Heart right ventricle (tissue), 16 donors: ENCODE measurements at regions of chr12 and their contacts with region 1.

Region 1: GRCh38 chr12:102905229-102905628 is 11.8 kb downstream of the PAH start:
- DNase-seq: no peak
- ATAC-seq: no peak
- H3K4me3 ChIP-seq: no peak overlapping the region
- H3K27ac ChIP-seq: no peak overlapping the region
- H3K4me1 ChIP-seq: no peaks in the 10 kb centered on the region
- H3K27me3 ChIP-seq: no peaks in the 10 kb centered on the region
- CTCF ChIP-seq: no peak

Region 2: GRCh38 chr12:102757154-102757881 is 147.9 kb before region 1 on chr12:
- intact Hi-C with region 1: no loop called
- DNase-seq: peak; percentile 44 to 64
- ATAC-seq: peak in 7 of 8 donors; percentile 50 to 74 (median 59)
- H3K4me3 ChIP-seq: no peak overlapping the region
- H3K27ac ChIP-seq: peak overlapping the region in 8 of 10 donors; percentile 61 to 81 (median 67)
- H3K4me1 ChIP-seq: peaks cover 0 to 12% (median 4%) of the 10 kb centered on the region in 9 donors
- H3K27me3 ChIP-seq: peaks cover 0 to 5% (median 0%) of the 10 kb centered on the region in 7 donors
- CTCF ChIP-seq: no peak

Region 3: GRCh38 chr12:102869571-102869970 is 35.7 kb before region 1 on chr12:
- intact Hi-C with region 1: no loop called
- DNase-seq: no peak
- ATAC-seq: no peak
- H3K4me3 ChIP-seq: no peak overlapping the region
- H3K27ac ChIP-seq: no peak overlapping the region
- H3K4me1 ChIP-seq: peaks cover 0 to 6% (median 0%) of the 10 kb centered on the region in 9 donors
- H3K27me3 ChIP-seq: no peaks in the 10 kb centered on the region
- CTCF ChIP-seq: no peak

Region 4: DNA sequence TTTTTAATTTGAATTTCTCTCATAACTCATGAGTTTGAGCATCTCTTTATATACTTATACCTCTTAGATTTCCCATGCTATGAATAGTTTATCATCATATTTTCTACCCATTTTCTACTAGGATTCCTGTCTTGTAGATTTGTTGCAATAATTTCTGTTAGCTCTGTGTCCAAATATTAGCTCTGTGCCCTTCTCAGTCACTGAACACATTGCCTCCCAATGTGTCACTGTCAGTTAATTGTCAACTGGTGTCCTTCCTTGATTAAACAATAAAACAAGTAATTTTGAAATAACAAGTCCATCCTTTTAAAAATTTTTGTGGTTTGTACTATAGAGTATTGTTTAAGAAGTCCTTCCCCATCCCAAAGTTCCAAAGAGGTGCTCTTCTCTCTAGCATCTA is 16.0 kb after region 1 on chr12:
- intact Hi-C with region 1: loop called in 1 of 10 experiments (anchors 1 kb)
- DNase-seq: no peak
- ATAC-seq: no peak
- H3K4me3 ChIP-seq: no peak overlapping the region
- H3K27ac ChIP-seq: no peak overlapping the region
- H3K4me1 ChIP-seq: peaks cover 0 to 5% (median 0%) of the 10 kb centered on the region in 9 donors
- H3K27me3 ChIP-seq: peaks cover 0 to 29% (median 13%) of the 10 kb centered on the region in 7 donors
- CTCF ChIP-seq: no peak